Naive thymus-derived CD4-positive, alpha-beta T cell (primary cell): ENCODE measurements at regions of chr3 and their contacts with region 1.

Region 1: DNA sequence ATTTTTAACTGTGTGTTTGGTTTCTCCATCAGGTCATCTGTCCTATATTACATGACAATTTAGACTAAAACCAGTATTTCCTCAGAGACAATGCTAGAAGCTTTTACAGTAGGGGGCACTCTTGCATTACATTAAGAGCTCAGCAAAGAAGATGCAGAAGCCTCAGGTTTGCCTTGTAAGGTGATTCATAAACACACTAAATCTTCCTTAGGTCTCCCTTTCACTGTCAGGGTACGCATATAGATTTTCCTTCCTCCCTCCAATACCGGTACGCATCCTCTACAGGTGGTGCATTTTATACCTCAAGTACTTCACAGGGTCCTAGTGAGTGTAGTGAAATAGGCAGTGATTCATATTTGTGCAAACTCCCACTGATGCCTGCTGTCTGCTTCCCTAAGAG is 46.5 kb downstream of the CD86 start:
- DNase-seq: peak in 7 of 9 donors; percentile 19 to 66 (median 54)
- ATAC-seq: peak; percentile 79
- H3K4me3 ChIP-seq: no peak overlapping the region
- H3K4me3 Mint-ChIP-seq: peak overlapping the region in 1 of 10 donors; percentile 4
- H3K27ac ChIP-seq: no peak overlapping the region
- H3K27ac Mint-ChIP-seq: no peak overlapping the region
- H3K4me1 ChIP-seq: peaks cover 0 to 5% of the 10 kb centered on the region in 2 donors
- H3K4me1 Mint-ChIP-seq: peaks cover 0 to 37% (median 10%) of the 10 kb centered on the region in 7 donors
- H3K27me3 ChIP-seq: no peaks in the 10 kb centered on the region
- H3K27me3 Mint-ChIP-seq: no peaks in the 10 kb centered on the region

Region 2: GRCh38 chr3:121895121-121895520 is 206.5 kb before region 1 on chr3:
- CTCF ChIA-PET with region 1: no interaction called
- POLR2A ChIA-PET with region 1: no interaction called
- intact Hi-C with region 1: no loop called
- DNase-seq: no peak
- ATAC-seq: no peak
- H3K4me3 ChIP-seq: no peak overlapping the region
- H3K4me3 Mint-ChIP-seq: no peak overlapping the region
- H3K27ac ChIP-seq: no peak overlapping the region
- H3K27ac Mint-ChIP-seq: no peak overlapping the region
- H3K4me1 ChIP-seq: no peaks in the 10 kb centered on the region
- H3K4me1 Mint-ChIP-seq: peaks cover 0 to 1% (median 0%) of the 10 kb centered on the region in 7 donors
- H3K27me3 ChIP-seq: no peaks in the 10 kb centered on the region
- H3K27me3 Mint-ChIP-seq: no peaks in the 10 kb centered on the region

Region 3: DNA sequence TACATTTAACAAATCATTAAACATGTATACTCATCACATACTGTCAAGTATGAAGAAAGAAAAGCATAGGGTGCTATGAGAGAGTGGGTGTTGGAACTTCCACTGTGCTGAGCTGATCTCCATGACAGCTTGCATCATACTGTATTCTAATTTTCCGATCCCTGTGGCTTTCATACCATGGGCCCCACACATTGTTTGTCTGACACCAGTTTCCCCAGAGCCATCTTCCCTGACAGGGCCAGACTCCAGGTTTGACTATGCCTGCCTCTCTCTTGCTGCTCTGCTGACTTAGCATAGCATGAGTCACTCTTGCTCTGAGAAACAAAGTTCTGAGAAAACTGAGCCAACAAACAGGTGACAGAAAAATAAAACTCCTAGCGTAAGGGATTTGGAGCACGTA is 44.8 kb after region 1 on chr3:
- CTCF ChIA-PET with region 1: no interaction called
- POLR2A ChIA-PET with region 1: no interaction called
- intact Hi-C with region 1: loop called in 1 of 2 experiments (anchors 1 kb)
- DNase-seq: peak in 1 of 9 donors; percentile 65
- ATAC-seq: no peak
- H3K4me3 ChIP-seq: no peak overlapping the region
- H3K4me3 Mint-ChIP-seq: peak overlapping the region in 1 of 10 donors; percentile 1
- H3K27ac ChIP-seq: no peak overlapping the region
- H3K27ac Mint-ChIP-seq: peak overlapping the region in 1 of 9 donors; percentile 67
- H3K4me1 ChIP-seq: no peaks in the 10 kb centered on the region
- H3K4me1 Mint-ChIP-seq: peaks cover 0 to 25% (median 0%) of the 10 kb centered on the region in 7 donors
- H3K27me3 ChIP-seq: no peaks in the 10 kb centered on the region
- H3K27me3 Mint-ChIP-seq: peaks cover 0 to 22% (median 15%) of the 10 kb centered on the region in 5 donors

Region 4: DNA sequence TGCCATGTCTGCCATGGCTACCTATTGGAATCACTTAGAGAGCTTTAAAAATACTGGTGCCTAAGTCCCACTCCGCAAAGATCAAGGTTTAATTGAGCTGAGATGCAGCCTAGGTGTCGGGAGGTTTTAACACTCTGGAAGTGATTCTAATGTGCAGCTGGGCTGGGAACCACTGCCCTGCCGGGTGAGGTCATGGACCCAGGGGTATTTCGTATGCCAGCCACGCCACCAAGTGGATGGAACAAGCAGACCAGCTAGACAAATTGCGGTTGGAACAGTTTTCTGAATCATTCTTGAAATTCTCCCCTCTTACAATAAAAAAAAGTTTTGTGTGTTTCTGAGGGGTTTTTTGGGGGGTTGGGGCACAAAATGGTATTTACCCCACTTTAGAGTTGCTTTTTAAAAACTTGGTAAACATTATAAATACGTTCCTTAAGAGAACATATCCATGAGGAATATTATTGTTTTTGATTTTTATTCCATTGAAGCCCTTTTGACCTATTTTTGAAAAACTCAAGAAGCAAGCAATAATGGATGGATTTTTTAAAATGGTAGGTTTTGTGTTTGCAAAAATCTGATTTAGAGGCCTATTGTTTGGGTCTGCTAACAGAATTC is 157.2 kb after region 1 on chr3:
- CTCF ChIA-PET with region 1: no interaction called
- POLR2A ChIA-PET with region 1: no interaction called
- intact Hi-C with region 1: loop called in 1 of 2 experiments (anchors 1 kb)
- DNase-seq: peak in 1 of 9 donors; percentile 68
- ATAC-seq: peak; percentile 69
- H3K4me3 ChIP-seq: no peak overlapping the region
- H3K4me3 Mint-ChIP-seq: no peak overlapping the region
- H3K27ac ChIP-seq: no peak overlapping the region
- H3K27ac Mint-ChIP-seq: no peak overlapping the region
- H3K4me1 ChIP-seq: no peaks in the 10 kb centered on the region
- H3K4me1 Mint-ChIP-seq: peaks cover 0 to 14% (median 0%) of the 10 kb centered on the region in 7 donors
- H3K27me3 ChIP-seq: no peaks in the 10 kb centered on the region
- H3K27me3 Mint-ChIP-seq: peaks cover 12 to 26% (median 14%) of the 10 kb centered on the region in 5 donors

Region 5: DNA sequence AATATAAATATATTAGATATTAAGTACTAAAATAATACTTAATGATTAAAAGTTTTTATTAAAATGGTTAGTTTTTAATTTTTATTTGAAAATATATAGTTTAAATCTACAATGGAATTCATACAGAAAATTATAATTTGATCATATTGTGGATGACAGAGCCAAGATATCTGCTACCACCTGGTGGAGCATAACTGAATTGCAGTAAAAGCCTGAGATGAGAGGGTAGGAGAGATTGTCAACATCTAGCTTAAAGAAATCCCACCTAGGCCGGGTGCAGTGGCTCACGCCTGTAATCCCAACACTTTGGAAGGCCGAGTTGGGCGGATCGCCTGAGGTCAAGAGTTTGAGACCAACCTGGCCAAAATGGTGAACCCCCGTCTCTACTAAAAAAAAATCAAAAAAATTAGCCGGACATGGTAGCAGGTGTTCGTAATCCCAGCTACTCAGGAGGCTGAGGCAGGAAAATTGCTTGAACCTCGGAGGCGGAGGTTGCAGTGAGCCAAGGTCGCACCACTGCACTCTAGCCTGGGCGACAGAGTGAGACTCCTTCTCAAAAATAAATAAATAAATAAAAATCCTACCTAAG is 198.3 kb after region 1 on chr3:
- CTCF ChIA-PET with region 1: no interaction called
- POLR2A ChIA-PET with region 1: no interaction called
- intact Hi-C with region 1: loop called (anchors 1 kb)
- DNase-seq: peak in 7 of 9 donors; percentile 11 to 61 (median 45)
- ATAC-seq: peak; percentile 68
- H3K4me3 ChIP-seq: no peak overlapping the region
- H3K4me3 Mint-ChIP-seq: no peak overlapping the region
- H3K27ac ChIP-seq: no peak overlapping the region
- H3K27ac Mint-ChIP-seq: peak overlapping the region in 1 of 9 donors; percentile 49
- H3K4me1 ChIP-seq: peaks cover 0 to 5% of the 10 kb centered on the region in 2 donors
- H3K4me1 Mint-ChIP-seq: peaks cover 0 to 11% (median 4%) of the 10 kb centered on the region in 7 donors
- H3K27me3 ChIP-seq: no peaks in the 10 kb centered on the region
- H3K27me3 Mint-ChIP-seq: peaks cover 0 to 4% (median 2%) of the 10 kb centered on the region in 5 donors

Region 6: DNA sequence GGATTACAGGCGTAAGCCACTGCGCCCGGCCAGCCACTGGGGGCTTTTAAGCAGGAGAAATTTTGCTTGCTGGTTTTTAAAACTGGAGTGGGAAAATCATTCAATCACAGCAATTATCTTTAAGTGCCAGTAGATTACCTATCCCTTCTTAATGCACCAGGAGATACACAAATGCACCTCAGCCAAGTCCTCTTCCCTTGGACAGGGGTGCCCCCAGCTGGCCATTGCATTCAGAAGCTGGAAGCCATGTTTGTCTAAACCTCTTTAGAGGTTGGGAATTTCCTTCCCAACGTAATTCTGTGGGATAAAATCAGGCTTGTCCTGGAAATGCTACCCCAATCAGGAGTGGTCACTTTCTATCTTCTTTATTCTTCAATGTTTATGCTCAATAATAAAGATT is 254.8 kb after region 1 on chr3:
- CTCF ChIA-PET with region 1: interaction called, 5 read pairs
- POLR2A ChIA-PET with region 1: no interaction called
- intact Hi-C with region 1: loop called in 1 of 2 experiments (anchors 1 kb)
- DNase-seq: peak in 6 of 9 donors; percentile 6 to 32 (median 21)
- ATAC-seq: peak; percentile 36
- H3K4me3 ChIP-seq: no peak overlapping the region
- H3K4me3 Mint-ChIP-seq: no peak overlapping the region
- H3K27ac ChIP-seq: no peak overlapping the region
- H3K27ac Mint-ChIP-seq: no peak overlapping the region
- H3K4me1 ChIP-seq: no peaks in the 10 kb centered on the region
- H3K4me1 Mint-ChIP-seq: peaks cover 0 to 13% (median 0%) of the 10 kb centered on the region in 7 donors
- H3K27me3 ChIP-seq: no peaks in the 10 kb centered on the region
- H3K27me3 Mint-ChIP-seq: peaks cover 0 to 1% (median 0%) of the 10 kb centered on the region in 5 donors